Naive thymus-derived CD4-positive, alpha-beta T cell (primary cell): ENCODE measurements at regions of chr14 and their contacts with region 1.

Region 1: GRCh38 chr14:51846631-51847488 is 13.6 kb upstream of the GNG2 start:
- DNase-seq: peak; percentile 69 to 98 (median 94)
- ATAC-seq: peak; percentile 87
- H3K4me3 ChIP-seq: peak overlapping the region; percentile 63
- H3K4me3 Mint-ChIP-seq: peak overlapping the region; percentile 55 to 96 (median 88)
- H3K27ac ChIP-seq: peak overlapping the region; percentile 96
- H3K27ac Mint-ChIP-seq: peak overlapping the region; percentile 97 to 100 (median 99)
- H3K4me1 ChIP-seq: peaks cover 23 to 43% of the 10 kb centered on the region in 2 donors
- H3K4me1 Mint-ChIP-seq: peaks cover 29 to 83% (median 74%) of the 10 kb centered on the region in 7 donors
- H3K27me3 ChIP-seq: no peaks in the 10 kb centered on the region
- H3K27me3 Mint-ChIP-seq: peaks cover 0 to 2% (median 0%) of the 10 kb centered on the region in 5 donors

Region 2: GRCh38 chr14:51094901-51095853 is 751.7 kb before region 1 on chr14 and contains the start of gene TRIM9:
- CTCF ChIA-PET with region 1: no interaction called
- POLR2A ChIA-PET with region 1: no interaction called
- intact Hi-C with region 1: loop called in 1 of 2 experiments (anchors 2 kb)
- DNase-seq: peak; percentile 77 to 93 (median 91)
- ATAC-seq: peak; percentile 96
- H3K4me3 ChIP-seq: peak within 1 kb of the TSS; percentile 83
- H3K4me3 Mint-ChIP-seq: peak within 1 kb of the TSS; percentile 89 to 98 (median 95)
- H3K27ac ChIP-seq: peak within 1 kb of the TSS; percentile 58
- H3K27ac Mint-ChIP-seq: peak within 1 kb of the TSS; percentile 9 to 93 (median 87)
- H3K4me1 ChIP-seq: peaks cover 3 to 8% of the 10 kb centered on the region in 2 donors
- H3K4me1 Mint-ChIP-seq: peaks cover 4 to 18% (median 9%) of the 10 kb centered on the region in 7 donors
- H3K27me3 ChIP-seq: peaks cover 0 to 3% of the 10 kb centered on the region in 2 donors
- H3K27me3 Mint-ChIP-seq: peaks cover 12 to 70% (median 17%) of the 10 kb centered on the region in 5 donors
- total RNA-seq, gene TRIM9: 0.27 to 1.7 (median 0.39) TPM

Region 3: GRCh38 chr14:51860164-51860824 is 13.4 kb after region 1 on chr14 and contains the start of gene GNG2:
- CTCF ChIA-PET with region 1: interaction called, 9 read pairs
- POLR2A ChIA-PET with region 1: interaction called, 83 read pairs
- intact Hi-C with region 1: loop called (anchors 1 kb)
- DNase-seq: peak; percentile 62 to 87 (median 84)
- ATAC-seq: peak; percentile 98
- H3K4me3 ChIP-seq: peak within 1 kb of the TSS; percentile 65
- H3K4me3 Mint-ChIP-seq: peak within 1 kb of the TSS; percentile 89 to 99 (median 96)
- H3K27ac ChIP-seq: peak within 1 kb of the TSS; percentile 90
- H3K27ac Mint-ChIP-seq: peak within 1 kb of the TSS; percentile 88 to 99 (median 96)
- H3K4me1 ChIP-seq: peaks cover 28 to 45% of the 10 kb centered on the region in 2 donors
- H3K4me1 Mint-ChIP-seq: peaks cover 43 to 78% (median 65%) of the 10 kb centered on the region in 7 donors
- H3K27me3 ChIP-seq: no peaks in the 10 kb centered on the region
- H3K27me3 Mint-ChIP-seq: no peaks in the 10 kb centered on the region
- total RNA-seq, gene GNG2: 62.1 to 199 (median 106) TPM

Region 4: DNA sequence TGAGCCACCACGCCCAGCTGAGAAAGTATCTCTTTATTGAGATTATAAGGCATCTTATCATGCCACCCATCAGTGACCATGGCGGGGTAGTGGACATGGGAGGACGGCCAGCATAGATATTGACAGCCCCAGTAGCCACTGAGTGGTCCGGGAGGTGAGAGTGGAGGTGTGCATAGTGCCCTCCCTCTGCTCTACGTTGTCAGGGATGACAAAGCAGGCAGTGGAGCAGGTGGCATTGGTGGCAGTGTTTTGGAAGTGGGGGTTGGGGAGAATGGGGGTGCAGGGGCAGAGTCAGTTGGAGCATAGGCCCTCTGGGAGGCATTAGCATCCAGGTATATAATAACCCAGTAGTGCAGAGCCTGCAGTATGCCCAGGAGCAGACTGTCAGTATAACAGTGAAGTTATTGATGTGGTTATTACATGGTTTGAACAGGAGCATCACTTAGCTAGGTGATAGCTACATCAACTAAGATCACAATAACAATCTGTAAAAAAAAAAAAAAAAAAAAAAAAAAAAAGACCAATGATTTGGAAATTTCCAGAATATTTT is 54.7 kb after region 1 on chr14:
- CTCF ChIA-PET with region 1: no interaction called
- POLR2A ChIA-PET with region 1: interaction called, 7 read pairs
- intact Hi-C with region 1: loop called (anchors 1 to 2 kb)
- DNase-seq: peak in 7 of 9 donors; percentile 16 to 56 (median 42)
- ATAC-seq: peak; percentile 66
- H3K4me3 ChIP-seq: no peak overlapping the region
- H3K4me3 Mint-ChIP-seq: peak overlapping the region in 5 of 10 donors; percentile 7 to 59 (median 30)
- H3K27ac ChIP-seq: no peak overlapping the region
- H3K27ac Mint-ChIP-seq: peak overlapping the region in 8 of 9 donors; percentile 54 to 94 (median 75)
- H3K4me1 ChIP-seq: peaks cover 36% of the 10 kb centered on the region in 2 donors
- H3K4me1 Mint-ChIP-seq: peaks cover 39 to 84% (median 75%) of the 10 kb centered on the region in 7 donors
- H3K27me3 ChIP-seq: no peaks in the 10 kb centered on the region
- H3K27me3 Mint-ChIP-seq: no peaks in the 10 kb centered on the region

Region 5: GRCh38 chr14:51979088-51979709 is 132.3 kb after region 1 on chr14:
- CTCF ChIA-PET with region 1: interaction called, 13 read pairs
- POLR2A ChIA-PET with region 1: interaction called, 9 read pairs
- intact Hi-C with region 1: loop called in 1 of 2 experiments (anchors 1 kb)
- DNase-seq: peak; percentile 53 to 80 (median 70)
- ATAC-seq: peak; percentile 91
- H3K4me3 ChIP-seq: no peak overlapping the region
- H3K4me3 Mint-ChIP-seq: no peak overlapping the region
- H3K27ac ChIP-seq: no peak overlapping the region
- H3K27ac Mint-ChIP-seq: peak overlapping the region in 3 of 9 donors; percentile 15 to 67 (median 20)
- H3K4me1 ChIP-seq: peaks cover 0 to 10% of the 10 kb centered on the region in 2 donors
- H3K4me1 Mint-ChIP-seq: peaks cover 0 to 18% (median 6%) of the 10 kb centered on the region in 7 donors
- H3K27me3 ChIP-seq: no peaks in the 10 kb centered on the region
- H3K27me3 Mint-ChIP-seq: peaks cover 0 to 5% (median 0%) of the 10 kb centered on the region in 5 donors

Region 6: DNA sequence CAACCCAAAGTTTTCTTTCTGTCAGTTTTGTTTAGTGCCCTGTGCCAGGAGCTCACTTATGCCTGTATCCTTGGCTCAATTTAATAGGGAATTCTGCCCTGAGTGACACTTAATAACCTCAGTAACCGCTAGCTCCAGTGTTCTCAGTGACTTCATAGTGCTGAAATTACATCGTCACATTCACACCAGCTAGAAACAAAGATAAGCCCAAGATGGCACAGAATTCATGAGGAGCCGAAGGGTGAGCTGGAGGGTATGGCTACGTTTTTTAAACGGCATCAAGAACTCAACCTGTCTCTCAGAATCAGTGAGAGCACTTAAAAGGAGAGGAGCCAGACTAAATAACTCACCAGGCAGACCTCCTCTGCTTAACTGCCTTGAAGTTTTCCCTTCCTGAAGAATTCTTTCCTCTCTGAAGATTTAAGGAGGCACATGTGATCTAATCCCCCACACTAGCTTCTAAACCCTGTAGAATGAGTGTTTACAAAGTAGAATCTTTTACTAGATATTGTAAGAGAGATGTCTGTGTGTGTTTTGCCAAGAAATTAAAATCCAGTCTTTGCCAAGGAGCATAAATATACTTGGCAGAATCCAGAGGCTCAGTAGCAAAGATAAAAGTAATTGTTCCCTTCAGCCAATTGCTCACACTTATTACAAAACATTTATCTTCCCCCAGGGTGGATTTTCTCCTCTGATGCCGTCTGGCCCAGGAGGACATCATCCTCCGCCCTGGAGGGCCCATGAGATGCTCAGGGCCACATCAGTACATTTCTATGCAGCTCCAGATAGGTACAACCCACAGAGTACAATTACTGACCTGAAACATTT is 504.6 kb after region 1 on chr14:
- CTCF ChIA-PET with region 1: no interaction called
- POLR2A ChIA-PET with region 1: no interaction called
- intact Hi-C with region 1: loop called in 1 of 2 experiments (anchors 1 kb)
- DNase-seq: peak in 2 of 9 donors; percentile 2 to 10
- ATAC-seq: peak; percentile 54
- H3K4me3 ChIP-seq: peak overlapping the region; percentile 18
- H3K4me3 Mint-ChIP-seq: peak overlapping the region; percentile 48 to 94 (median 76)
- H3K27ac ChIP-seq: peak overlapping the region; percentile 59
- H3K27ac Mint-ChIP-seq: peak overlapping the region; percentile 81 to 100 (median 88)
- H3K4me1 ChIP-seq: peaks cover 46 to 53% of the 10 kb centered on the region in 2 donors
- H3K4me1 Mint-ChIP-seq: peaks cover 36 to 76% (median 62%) of the 10 kb centered on the region in 7 donors
- H3K27me3 ChIP-seq: no peaks in the 10 kb centered on the region
- H3K27me3 Mint-ChIP-seq: peaks cover 0 to 4% (median 0%) of the 10 kb centered on the region in 5 donors